ENCODE measurements at regions of chr6 and their contacts with region 1.

Region 1: DNA sequence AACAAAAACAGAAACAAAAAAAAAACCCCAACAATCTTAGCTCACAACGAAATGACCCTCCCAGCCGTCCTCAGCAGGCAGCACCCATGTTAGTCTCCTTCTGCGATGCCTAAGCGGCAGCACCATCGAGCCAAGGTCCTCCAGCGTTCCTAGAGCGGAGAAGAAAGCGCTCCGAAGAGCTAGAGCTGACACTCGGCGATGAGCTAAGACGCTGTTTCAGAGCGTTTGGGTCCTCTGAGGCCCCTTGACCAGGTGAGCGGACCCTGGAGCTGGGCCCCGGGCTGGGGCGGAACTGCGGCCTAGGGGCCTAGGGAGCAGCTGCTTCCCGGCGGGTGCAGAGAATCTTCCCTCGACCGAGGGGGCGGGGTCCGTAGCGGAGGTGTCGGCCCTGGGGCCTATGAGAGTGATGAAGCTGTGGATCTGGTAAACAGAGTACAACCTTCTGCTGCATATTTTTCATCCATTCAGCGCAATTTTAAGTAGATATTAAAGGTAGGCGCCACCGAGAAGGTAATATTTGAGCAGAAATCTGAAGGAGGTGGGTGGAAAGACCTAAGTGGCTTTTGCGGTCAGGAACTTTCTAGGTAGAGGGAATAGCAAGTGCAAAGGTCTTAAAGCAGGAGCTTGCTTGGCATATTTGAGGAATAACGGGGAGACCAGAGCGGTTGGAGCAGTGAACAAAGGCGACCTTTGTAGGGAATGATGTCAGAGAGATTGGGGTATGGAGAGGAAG is at the start of gene ZSCAN26:
- DNase-seq: peak; percentile 95
- ATAC-seq: peak; percentile 96
- H3K4me3 ChIP-seq: peak within 1 kb of the TSS; percentile 62 to 100 (median 72)
- H3K4me3 Mint-ChIP-seq: no peak within 1 kb of the TSS
- H3K27ac ChIP-seq: peak within 1 kb of the TSS; percentile 66 to 77
- H3K27ac Mint-ChIP-seq: no peak within 1 kb of the TSS
- H3K4me1 ChIP-seq: peaks cover 10 to 18% of the 10 kb centered on the region in 2 donors
- H3K4me1 Mint-ChIP-seq: peaks cover 10% of the 10 kb centered on the region
- H3K27me3 ChIP-seq: peaks cover 0 to 3% (median 0%) of the 10 kb centered on the region in 4 experiments
- H3K27me3 Mint-ChIP-seq: no peaks in the 10 kb centered on the region
- CTCF ChIP-seq: no peak
- total RNA-seq, gene ZSCAN26: 29.3 and 31.8 TPM in 2 replicates

Region 2: GRCh38 chr6:27388293-27389197 is 878.6 kb before region 1 on chr6 and contains the start of gene ZNF391:
- CTCF ChIA-PET with region 1: no interaction called
- POLR2A ChIA-PET with region 1: no interaction called
- intact Hi-C with region 1: loop called (anchors 5 kb)
- DNase-seq: peak; percentile 88
- ATAC-seq: peak; percentile 87
- H3K4me3 ChIP-seq: peak within 1 kb of the TSS; percentile 70 to 97 (median 94)
- H3K4me3 Mint-ChIP-seq: peak within 1 kb of the TSS; percentile 99
- H3K27ac ChIP-seq: peak within 1 kb of the TSS; percentile 64 to 83
- H3K27ac Mint-ChIP-seq: peak within 1 kb of the TSS; percentile 98
- H3K4me1 ChIP-seq: peaks cover 10 to 16% of the 10 kb centered on the region in 2 donors
- H3K4me1 Mint-ChIP-seq: peaks cover 17% of the 10 kb centered on the region
- H3K27me3 ChIP-seq: peaks cover 0 to 2% (median 0%) of the 10 kb centered on the region in 4 experiments
- H3K27me3 Mint-ChIP-seq: peaks cover under 1% of the 10 kb centered on the region
- CTCF ChIP-seq: no peak
- total RNA-seq, gene ZNF391: 4.4 and 7.0 TPM in 2 replicates

Region 3: GRCh38 chr6:27809939-27810767 is 457.0 kb before region 1 on chr6:
- CTCF ChIA-PET with region 1: no interaction called
- POLR2A ChIA-PET with region 1: no interaction called
- intact Hi-C with region 1: no loop called
- DNase-seq: peak; percentile 96
- ATAC-seq: peak; percentile 50
- H3K4me3 ChIP-seq: peak overlapping the region; percentile 66 to 94 (median 84)
- H3K4me3 Mint-ChIP-seq: peak overlapping the region; percentile 98
- H3K27ac ChIP-seq: peak overlapping the region; percentile 82
- H3K27ac Mint-ChIP-seq: peak overlapping the region; percentile 99
- H3K4me1 ChIP-seq: peaks cover 37 to 47% of the 10 kb centered on the region in 2 donors
- H3K4me1 Mint-ChIP-seq: peaks cover 58% of the 10 kb centered on the region
- H3K27me3 ChIP-seq: no peaks in the 10 kb centered on the region
- H3K27me3 Mint-ChIP-seq: no peaks in the 10 kb centered on the region
- CTCF ChIP-seq: no peak

Region 4: GRCh38 chr6:28124102-28124970 is 142.8 kb before region 1 on chr6 and contains the start of gene ZSCAN16:
- CTCF ChIA-PET with region 1: no interaction called
- POLR2A ChIA-PET with region 1: no interaction called
- intact Hi-C with region 1: loop called (anchors 5 kb)
- DNase-seq: peak; percentile 86
- ATAC-seq: peak; percentile 96
- H3K4me3 ChIP-seq: peak within 1 kb of the TSS; percentile 70 to 91 (median 75)
- H3K4me3 Mint-ChIP-seq: peak within 1 kb of the TSS; percentile 98
- H3K27ac ChIP-seq: peak within 1 kb of the TSS; percentile 68 to 74
- H3K27ac Mint-ChIP-seq: peak within 1 kb of the TSS; percentile 92
- H3K4me1 ChIP-seq: peaks cover 12 to 18% of the 10 kb centered on the region in 2 donors
- H3K4me1 Mint-ChIP-seq: peaks cover 31% of the 10 kb centered on the region
- H3K27me3 ChIP-seq: no peaks in the 10 kb centered on the region
- H3K27me3 Mint-ChIP-seq: no peaks in the 10 kb centered on the region
- CTCF ChIP-seq: no peak
- total RNA-seq, gene ZSCAN16: 15.4 and 15.8 TPM in 2 replicates

Region 5: DNA sequence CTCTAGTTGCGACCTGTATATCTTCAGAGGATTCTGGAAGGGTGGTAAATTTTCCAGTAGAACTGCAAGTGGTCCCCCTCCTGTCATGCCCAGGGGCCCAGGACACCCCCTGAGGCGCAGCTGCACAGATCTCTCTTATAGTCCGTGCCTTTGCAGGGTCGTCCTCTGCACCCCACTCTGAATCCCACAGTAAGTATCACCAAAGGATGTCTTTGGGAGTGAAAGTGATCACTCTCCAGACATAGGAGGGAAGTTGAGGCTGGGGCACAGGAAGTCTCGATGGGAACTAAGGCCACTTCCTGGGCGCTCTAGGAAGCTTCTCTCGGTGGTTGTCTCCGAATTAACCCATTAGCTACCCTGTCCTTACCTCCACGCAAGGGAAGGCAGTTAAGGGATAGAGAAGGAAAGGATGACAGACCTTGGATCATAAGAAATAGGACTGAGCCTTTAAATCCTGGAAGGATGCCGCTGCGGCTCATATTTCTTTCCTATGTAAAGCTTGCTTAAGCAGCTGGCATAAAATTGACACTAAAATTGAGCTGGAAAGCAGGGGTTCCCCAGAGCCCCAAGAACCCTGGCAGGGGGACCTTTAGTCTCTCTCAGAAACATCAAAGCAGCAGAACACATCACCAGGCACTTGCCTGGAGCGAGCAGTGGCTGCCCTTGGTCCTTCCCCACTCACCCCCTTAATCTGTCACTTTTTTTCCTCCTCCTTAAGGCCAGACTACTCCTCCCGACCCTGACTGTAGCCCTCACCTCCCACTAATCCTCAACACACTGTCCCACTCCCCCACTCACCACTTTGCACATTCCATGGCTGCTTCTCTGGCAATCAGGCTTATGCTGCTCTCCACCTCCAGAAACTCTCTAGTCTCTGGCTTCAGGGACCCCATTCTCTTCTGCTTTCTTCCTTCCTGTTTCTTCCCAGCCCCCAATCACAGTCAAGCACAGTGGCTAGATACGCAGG is 14.8 kb before region 1 on chr6 and contains the start of gene ZKSCAN4:
- CTCF ChIA-PET with region 1: interaction called, 24 read pairs
- POLR2A ChIA-PET with region 1: interaction called, 12 read pairs
- intact Hi-C with region 1: loop called (anchors 1 kb)
- DNase-seq: peak; percentile 89
- ATAC-seq: peak; percentile 90
- H3K4me3 ChIP-seq: peak within 1 kb of the TSS; percentile 59 to 99 (median 94)
- H3K4me3 Mint-ChIP-seq: peak within 1 kb of the TSS; percentile 98
- H3K27ac ChIP-seq: peak within 1 kb of the TSS; percentile 22 to 58
- H3K27ac Mint-ChIP-seq: peak within 1 kb of the TSS; percentile 78
- H3K4me1 ChIP-seq: peaks cover 14 to 20% of the 10 kb centered on the region in 2 donors
- H3K4me1 Mint-ChIP-seq: peaks cover 31% of the 10 kb centered on the region
- H3K27me3 ChIP-seq: peaks cover 0 to 3% (median 2%) of the 10 kb centered on the region in 4 experiments
- H3K27me3 Mint-ChIP-seq: no peaks in the 10 kb centered on the region
- CTCF ChIP-seq: no peak
- total RNA-seq, gene ZKSCAN4: 10.9 and 12.1 TPM in 2 replicates

Region 6: DNA sequence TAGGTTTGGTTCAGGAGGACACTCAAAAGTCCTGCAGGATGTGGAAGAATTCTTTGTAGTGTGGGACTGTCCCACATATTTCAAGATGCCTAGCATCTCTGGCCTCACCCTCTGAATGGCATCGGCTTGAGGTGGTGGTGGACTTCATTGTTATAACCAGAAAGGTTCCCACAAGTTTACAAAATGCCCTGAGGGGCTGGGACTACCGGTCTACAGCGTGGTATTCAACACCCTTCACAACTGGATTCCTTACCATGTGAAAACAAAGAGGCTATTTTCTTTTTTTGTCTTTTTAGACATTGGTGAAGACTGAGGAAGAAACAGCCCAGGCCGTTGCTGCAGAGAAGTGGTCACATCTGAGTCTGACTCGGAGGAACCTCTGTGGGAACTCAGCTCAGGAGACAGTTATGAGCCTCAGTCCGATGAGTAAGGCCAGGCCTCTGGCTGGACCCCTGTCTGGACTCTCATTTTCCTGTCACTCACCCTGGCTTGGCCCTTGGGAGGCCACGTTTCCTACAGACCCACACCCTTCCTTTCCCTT is 29.5 kb after region 1 on chr6:
- CTCF ChIA-PET with region 1: no interaction called
- POLR2A ChIA-PET with region 1: no interaction called
- intact Hi-C with region 1: no loop called
- DNase-seq: no peak
- ATAC-seq: no peak
- H3K4me3 ChIP-seq: no peak overlapping the region
- H3K4me3 Mint-ChIP-seq: no peak overlapping the region
- H3K27ac ChIP-seq: no peak overlapping the region
- H3K27ac Mint-ChIP-seq: no peak overlapping the region
- H3K4me1 ChIP-seq: no peaks in the 10 kb centered on the region
- H3K4me1 Mint-ChIP-seq: no peaks in the 10 kb centered on the region
- H3K27me3 ChIP-seq: no peaks in the 10 kb centered on the region
- H3K27me3 Mint-ChIP-seq: no peaks in the 10 kb centered on the region
- CTCF ChIP-seq: no peak

Region 7: GRCh38 chr6:28349892-28350737 is 83.0 kb after region 1 on chr6 and contains the start of gene ZKSCAN3:
- CTCF ChIA-PET with region 1: interaction called, 22 read pairs
- POLR2A ChIA-PET with region 1: no interaction called
- intact Hi-C with region 1: loop called (anchors 1 kb)
- DNase-seq: peak; percentile 81
- ATAC-seq: peak; percentile 99
- H3K4me3 ChIP-seq: peak within 1 kb of the TSS; percentile 59 to 88 (median 77)
- H3K4me3 Mint-ChIP-seq: peak within 1 kb of the TSS; percentile 92
- H3K27ac ChIP-seq: peak within 1 kb of the TSS; percentile 26 to 58
- H3K27ac Mint-ChIP-seq: peak within 1 kb of the TSS; percentile 83
- H3K4me1 ChIP-seq: peaks cover 10 to 11% of the 10 kb centered on the region in 2 donors
- H3K4me1 Mint-ChIP-seq: peaks cover 23% of the 10 kb centered on the region
- H3K27me3 ChIP-seq: peaks cover 0 to 3% (median 0%) of the 10 kb centered on the region in 4 experiments
- H3K27me3 Mint-ChIP-seq: peaks cover 8% of the 10 kb centered on the region
- CTCF ChIP-seq: no peak
- total RNA-seq, gene ZKSCAN3: 11.0 and 11.9 TPM in 2 replicates

Region 8: DNA sequence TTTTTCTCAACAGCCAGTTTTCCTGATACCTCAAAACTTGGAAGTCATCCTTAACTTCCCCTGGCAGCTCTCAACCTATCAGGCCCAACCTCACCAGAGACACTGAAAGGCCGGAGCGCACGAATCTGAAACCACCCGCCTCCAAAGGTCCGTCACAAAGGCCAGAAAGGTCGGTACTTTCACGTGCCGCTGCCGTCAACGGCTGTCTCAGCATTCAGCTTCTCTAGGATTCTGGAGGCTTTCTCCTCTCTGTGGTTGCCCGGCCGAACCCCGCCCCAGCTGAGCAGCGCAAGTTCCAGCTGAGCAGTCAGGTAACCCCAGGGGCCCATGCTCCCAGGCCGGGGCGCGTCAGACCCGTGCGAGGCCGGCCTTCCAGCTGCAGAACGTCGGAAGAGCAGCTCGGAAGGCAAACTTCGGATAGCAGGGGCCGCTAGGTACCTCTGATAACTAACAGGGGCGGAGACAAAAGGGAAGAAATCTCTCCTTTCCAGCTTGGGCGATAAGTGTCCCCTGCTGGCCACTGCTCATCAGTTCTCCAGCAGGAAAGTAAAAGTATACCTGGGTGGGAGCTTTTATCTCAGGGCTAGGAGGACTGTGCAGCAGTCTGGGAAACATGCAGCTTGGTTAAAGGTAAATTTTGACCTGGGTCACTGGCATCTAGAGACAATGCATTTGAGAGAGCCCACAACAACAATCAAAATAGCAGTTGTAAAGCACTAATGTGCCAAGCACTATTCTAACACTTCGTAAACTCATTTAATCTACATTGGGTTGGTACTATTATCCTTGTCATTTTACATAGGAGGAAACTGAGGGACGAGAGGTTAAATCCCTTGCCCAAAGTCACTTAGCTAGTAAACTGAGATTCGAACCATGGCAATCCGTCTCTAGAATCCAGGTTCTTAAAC is 116.4 kb after region 1 on chr6:
- CTCF ChIA-PET with region 1: interaction called, 3 read pairs
- POLR2A ChIA-PET with region 1: no interaction called
- intact Hi-C with region 1: loop called (anchors 1 kb)
- DNase-seq: peak; percentile 93
- ATAC-seq: peak; percentile 98
- H3K4me3 ChIP-seq: peak overlapping the region; percentile 45 to 64 (median 55)
- H3K4me3 Mint-ChIP-seq: peak overlapping the region; percentile 92
- H3K27ac ChIP-seq: peak overlapping the region; percentile 75 to 93
- H3K27ac Mint-ChIP-seq: peak overlapping the region; percentile 94
- H3K4me1 ChIP-seq: peaks cover 11 to 16% of the 10 kb centered on the region in 2 donors
- H3K4me1 Mint-ChIP-seq: peaks cover 19% of the 10 kb centered on the region
- H3K27me3 ChIP-seq: no peaks in the 10 kb centered on the region
- H3K27me3 Mint-ChIP-seq: no peaks in the 10 kb centered on the region
- CTCF ChIP-seq: peak; percentile 42

Region 9: GRCh38 chr6:28523241-28523622 is 256.1 kb after region 1 on chr6:
- CTCF ChIA-PET with region 1: no interaction called
- POLR2A ChIA-PET with region 1: no interaction called
- intact Hi-C with region 1: no loop called
- DNase-seq: no peak
- ATAC-seq: no peak
- H3K4me3 ChIP-seq: no peak overlapping the region
- H3K4me3 Mint-ChIP-seq: no peak overlapping the region
- H3K27ac ChIP-seq: no peak overlapping the region
- H3K27ac Mint-ChIP-seq: no peak overlapping the region
- H3K4me1 ChIP-seq: no peaks in the 10 kb centered on the region
- H3K4me1 Mint-ChIP-seq: no peaks in the 10 kb centered on the region
- H3K27me3 ChIP-seq: peaks cover 0 to 52% (median 21%) of the 10 kb centered on the region in 4 experiments
- H3K27me3 Mint-ChIP-seq: peaks cover 65% of the 10 kb centered on the region
- CTCF ChIP-seq: no peak